OCI-LY7 (cell line): ENCODE measurements at regions of chr4 and their contacts with region 1.

Region 1: GRCh38 chr4:88284439-88285234 is at the start of gene PPM1K:
- DNase-seq: peak; percentile 99
- H3K4me3 ChIP-seq: peak within 1 kb of the TSS; percentile 79
- H3K27ac ChIP-seq: peak within 1 kb of the TSS; percentile 91
- H3K4me1 ChIP-seq: peaks cover 36% of the 10 kb centered on the region
- CTCF ChIP-seq: no peak; the same call in 1 of the 2 replicates
- total RNA-seq, gene PPM1K: 65.7 and 83.9 TPM in 2 replicates

Region 2: GRCh38 chr4:88297725-88298454 is 13.3 kb after region 1 on chr4:
- CTCF ChIA-PET with region 1: interaction called, 3 read pairs
- POLR2A ChIA-PET with region 1: interaction called, 53 read pairs
- intact Hi-C with region 1: no loop called
- DNase-seq: no peak
- H3K4me3 ChIP-seq: no peak overlapping the region
- H3K27ac ChIP-seq: no peak overlapping the region
- H3K4me1 ChIP-seq: no peaks in the 10 kb centered on the region
- CTCF ChIP-seq: no peak

Region 3: DNA sequence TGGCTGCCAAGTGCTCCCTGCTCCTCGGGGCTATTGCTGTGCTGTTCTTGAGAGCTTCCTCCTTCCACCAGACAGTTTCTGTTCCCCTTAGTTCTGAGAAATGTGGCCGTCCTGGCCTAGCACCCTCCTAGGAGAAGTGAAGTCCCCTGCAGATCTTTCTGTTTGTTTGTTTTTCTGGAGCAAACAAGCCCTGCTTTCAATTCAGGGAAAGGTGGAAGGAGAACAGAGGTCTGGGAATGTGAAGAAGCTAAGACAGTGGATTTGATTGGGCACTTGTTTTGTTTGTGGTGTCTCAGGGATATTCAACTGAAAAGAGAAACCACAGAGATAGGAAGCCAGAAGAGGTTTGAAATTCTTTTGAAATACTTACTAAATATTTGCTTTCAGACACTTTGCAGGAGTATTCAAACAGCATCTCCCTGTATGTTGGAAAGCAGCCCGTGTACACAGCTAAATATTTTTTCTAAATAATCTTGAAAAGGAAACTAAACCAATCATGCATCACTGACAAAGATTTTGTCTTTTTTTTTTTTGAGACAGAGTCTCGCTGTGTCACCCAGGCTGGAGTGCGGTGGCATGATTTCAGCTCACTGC is 36.2 kb after region 1 on chr4:
- CTCF ChIA-PET with region 1: interaction called, 5 read pairs
- POLR2A ChIA-PET with region 1: interaction called, 48 read pairs
- intact Hi-C with region 1: loop called (anchors 1 kb)
- DNase-seq: peak; percentile 89
- H3K4me3 ChIP-seq: peak overlapping the region; percentile 57
- H3K27ac ChIP-seq: peak overlapping the region; percentile 90
- H3K4me1 ChIP-seq: peaks cover 44% of the 10 kb centered on the region
- CTCF ChIP-seq: no peak

Region 4: DNA sequence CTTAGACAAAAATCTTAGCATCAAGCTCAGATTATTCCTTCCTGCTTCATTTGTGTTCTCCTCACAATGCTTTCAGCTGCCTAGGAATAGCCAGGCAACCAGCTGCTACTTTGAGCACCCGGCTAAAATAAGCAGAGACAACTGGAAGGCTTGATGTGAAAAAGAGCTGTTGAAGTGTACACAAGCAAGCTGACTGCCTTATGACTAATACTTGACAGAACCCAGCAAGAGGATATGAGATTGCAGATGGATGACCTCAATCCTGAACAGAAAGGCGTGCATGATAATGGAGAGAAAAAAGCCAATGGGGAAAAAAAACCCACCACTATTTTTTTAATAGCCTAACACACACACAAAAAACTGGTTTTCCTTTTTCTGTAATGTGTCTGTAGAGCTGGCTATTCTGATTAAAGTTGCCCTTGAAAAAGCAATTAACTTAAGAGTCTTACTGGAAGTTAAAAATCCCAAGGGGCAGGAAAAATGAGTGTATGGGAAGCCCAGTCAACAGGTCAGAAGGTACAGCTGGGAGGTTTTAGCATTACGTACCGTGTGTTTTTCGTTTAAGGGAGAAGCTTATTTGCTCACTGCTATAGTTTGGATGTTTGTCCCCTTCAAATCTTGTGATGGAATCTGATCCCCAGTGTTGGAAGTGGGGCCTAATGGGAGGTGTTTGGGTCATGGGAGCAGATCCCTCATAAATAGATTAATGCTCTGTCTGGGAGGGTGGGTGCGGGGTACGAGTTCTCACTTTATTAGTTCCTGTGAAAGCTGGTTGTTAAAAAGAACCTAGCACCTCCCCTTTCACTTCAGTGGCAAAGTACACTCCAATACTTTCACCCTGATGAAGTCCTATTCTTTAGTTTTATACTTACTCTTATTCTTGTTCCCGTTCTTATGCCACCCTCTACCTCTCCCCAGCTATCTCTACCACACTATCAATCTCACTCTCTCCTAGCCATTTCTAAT is 56.9 kb after region 1 on chr4:
- CTCF ChIA-PET with region 1: no interaction called
- POLR2A ChIA-PET with region 1: no interaction called
- intact Hi-C with region 1: no loop called
- DNase-seq: no peak
- H3K4me3 ChIP-seq: no peak overlapping the region
- H3K27ac ChIP-seq: no peak overlapping the region
- H3K4me1 ChIP-seq: no peaks in the 10 kb centered on the region
- CTCF ChIP-seq: no peak

Region 5: GRCh38 chr4:88523325-88524129 is 238.9 kb after region 1 on chr4 and contains the start of gene PYURF:
- CTCF ChIA-PET with region 1: no interaction called
- POLR2A ChIA-PET with region 1: no interaction called
- intact Hi-C with region 1: loop called (anchors 5 kb)
- DNase-seq: peak; percentile 80
- H3K4me3 ChIP-seq: peak within 1 kb of the TSS; percentile 78
- H3K27ac ChIP-seq: no peak within 1 kb of the TSS
- H3K4me1 ChIP-seq: no peaks in the 10 kb centered on the region
- CTCF ChIP-seq: no peak
- total RNA-seq, gene PYURF: 22.9 and 25.0 TPM in 2 replicates

Region 6: DNA sequence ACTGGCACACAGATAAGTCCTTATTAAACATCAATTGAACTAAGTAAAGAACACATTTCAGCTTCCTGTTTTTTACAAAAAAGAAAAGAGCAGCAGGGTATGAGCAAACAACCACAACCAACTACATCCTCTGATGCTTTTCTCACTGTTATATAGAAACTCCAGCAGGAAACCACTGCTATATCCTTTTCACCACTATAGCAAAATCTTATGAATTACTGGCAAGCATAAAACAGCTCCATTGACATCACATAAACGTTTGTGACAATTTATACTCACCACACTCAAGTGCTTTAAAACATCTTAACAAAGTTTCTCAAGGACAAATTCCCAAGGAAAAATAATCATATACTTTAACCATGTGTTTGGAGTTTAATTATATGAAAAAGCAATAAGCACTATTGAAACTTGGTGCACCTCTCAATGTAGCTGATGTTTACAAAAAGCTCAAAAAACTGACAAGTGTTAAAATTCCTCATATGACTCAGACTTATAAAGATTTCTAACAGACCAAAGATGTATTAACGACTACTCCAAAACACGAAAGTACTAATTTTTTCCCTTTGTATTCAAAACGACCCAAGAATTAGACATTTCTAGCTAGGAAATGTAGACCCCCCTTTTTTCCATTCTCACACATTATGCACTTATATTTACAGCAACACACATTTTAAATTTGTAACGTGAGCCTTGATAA is 1010.1 kb after region 1 on chr4:
- CTCF ChIA-PET with region 1: no interaction called
- POLR2A ChIA-PET with region 1: no interaction called
- intact Hi-C with region 1: loop called (anchors 10 kb)
- DNase-seq: peak; percentile 81
- H3K4me3 ChIP-seq: peak overlapping the region; percentile 54
- H3K27ac ChIP-seq: peak overlapping the region; percentile 71
- H3K4me1 ChIP-seq: peaks cover 85% of the 10 kb centered on the region
- CTCF ChIP-seq: no peak